ENCODE measurements at regions of chr15 and their contacts with region 1.

Region 1: GRCh38 chr15:71294886-71295638 is 179.8 kb downstream of the THSD4 start:
- DNase-seq: peak; percentile 79
- H3K4me3 Mint-ChIP-seq: no peak overlapping the region
- H3K27ac Mint-ChIP-seq: peak overlapping the region; percentile 77
- H3K4me1 Mint-ChIP-seq: peaks cover 83% of the 10 kb centered on the region
- H3K27me3 Mint-ChIP-seq: no peaks in the 10 kb centered on the region
- CTCF ChIP-seq: no peak

Region 2: GRCh38 chr15:70892002-70892914 is 402.8 kb before region 1 on chr15 and contains the starts of genes LRRC49 and THAP10:
- CTCF ChIA-PET with region 1: no interaction called
- intact Hi-C with region 1: loop called (anchors 10 kb)
- DNase-seq: peak; percentile 94
- H3K4me3 Mint-ChIP-seq: peak within 1 kb of the TSS; percentile 97
- H3K27ac Mint-ChIP-seq: peak within 1 kb of the TSS; percentile 100
- H3K4me1 Mint-ChIP-seq: peaks cover 34% of the 10 kb centered on the region
- H3K27me3 Mint-ChIP-seq: no peaks in the 10 kb centered on the region
- CTCF ChIP-seq: no peak
- total RNA-seq, gene LRRC49: 5.8 and 6.3 TPM in 2 replicates
- total RNA-seq, gene THAP10: 11.8 and 13.7 TPM in 2 replicates

Region 3: DNA sequence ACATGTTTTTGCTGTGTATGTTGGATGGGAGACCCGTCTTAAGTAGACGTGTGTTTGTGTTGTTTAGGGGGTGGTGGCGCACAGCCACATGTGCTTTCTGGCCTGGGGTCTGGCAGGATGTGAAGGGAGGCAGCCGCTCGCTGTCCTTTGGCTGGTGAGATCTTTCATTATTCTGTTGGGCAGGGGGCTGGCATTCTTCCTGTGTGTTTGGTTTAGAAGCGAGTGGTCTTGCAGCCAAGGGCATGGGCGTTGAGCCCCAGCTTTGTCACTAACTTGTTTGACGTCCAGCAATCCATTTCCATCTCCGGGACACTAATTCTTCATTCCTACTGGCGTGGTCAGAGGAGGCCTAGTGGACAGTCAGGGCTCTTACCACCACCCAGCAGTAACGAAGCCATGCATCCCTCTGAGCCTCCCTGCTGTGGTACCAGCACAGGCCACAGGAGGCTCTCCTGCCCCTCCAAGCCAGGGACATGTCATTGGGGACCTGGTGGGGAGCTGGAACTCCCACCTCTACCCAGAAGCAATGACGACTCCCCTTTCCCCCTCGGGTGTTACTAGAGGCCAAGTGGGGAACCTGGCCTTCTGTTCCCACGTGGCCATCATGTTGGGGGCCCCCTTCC is 169.1 kb before region 1 on chr15:
- CTCF ChIA-PET with region 1: interaction called, 7 read pairs
- intact Hi-C with region 1: loop called (anchors 5 kb)
- DNase-seq: no peak
- H3K4me3 Mint-ChIP-seq: no peak overlapping the region
- H3K27ac Mint-ChIP-seq: no peak overlapping the region
- H3K4me1 Mint-ChIP-seq: peaks cover 25% of the 10 kb centered on the region
- H3K27me3 Mint-ChIP-seq: no peaks in the 10 kb centered on the region
- CTCF ChIP-seq: peak; percentile 38

Region 4: DNA sequence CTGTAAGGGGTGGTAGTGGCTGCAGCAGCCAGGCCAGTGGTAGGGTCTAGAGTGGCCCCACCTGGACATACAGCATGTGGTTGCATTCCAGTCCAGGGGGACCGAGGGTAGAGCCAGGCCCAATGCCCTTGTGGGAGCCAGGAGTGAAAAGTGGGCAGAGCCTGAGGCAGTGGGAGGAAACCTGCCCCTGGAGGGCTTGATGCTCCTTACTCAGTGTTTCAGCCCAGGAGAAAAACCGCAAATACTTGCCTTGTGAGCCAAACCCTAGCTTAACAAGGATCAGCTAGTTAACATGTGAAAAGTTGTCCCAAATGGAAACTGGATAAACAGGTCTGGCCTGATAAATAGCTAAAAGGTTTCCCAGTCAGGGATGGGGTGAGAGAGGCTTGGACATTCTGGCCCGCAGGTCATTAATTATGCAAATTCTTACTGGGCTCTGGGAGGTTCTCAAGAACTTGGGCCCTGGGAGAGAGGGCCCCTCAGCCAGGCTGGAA is 42.2 kb after region 1 on chr15:
- CTCF ChIA-PET with region 1: interaction called, 13 read pairs
- intact Hi-C with region 1: loop called (anchors 2 kb)
- DNase-seq: peak; percentile 77
- H3K4me3 Mint-ChIP-seq: peak overlapping the region; percentile 4
- H3K27ac Mint-ChIP-seq: peak overlapping the region; percentile 51
- H3K4me1 Mint-ChIP-seq: peaks cover 32% of the 10 kb centered on the region
- H3K27me3 Mint-ChIP-seq: no peaks in the 10 kb centered on the region
- CTCF ChIP-seq: no peak